Psoas muscle (tissue), 8 donors: ENCODE measurements at regions of chr1 and their contacts with region 1.

Region 1: DNA sequence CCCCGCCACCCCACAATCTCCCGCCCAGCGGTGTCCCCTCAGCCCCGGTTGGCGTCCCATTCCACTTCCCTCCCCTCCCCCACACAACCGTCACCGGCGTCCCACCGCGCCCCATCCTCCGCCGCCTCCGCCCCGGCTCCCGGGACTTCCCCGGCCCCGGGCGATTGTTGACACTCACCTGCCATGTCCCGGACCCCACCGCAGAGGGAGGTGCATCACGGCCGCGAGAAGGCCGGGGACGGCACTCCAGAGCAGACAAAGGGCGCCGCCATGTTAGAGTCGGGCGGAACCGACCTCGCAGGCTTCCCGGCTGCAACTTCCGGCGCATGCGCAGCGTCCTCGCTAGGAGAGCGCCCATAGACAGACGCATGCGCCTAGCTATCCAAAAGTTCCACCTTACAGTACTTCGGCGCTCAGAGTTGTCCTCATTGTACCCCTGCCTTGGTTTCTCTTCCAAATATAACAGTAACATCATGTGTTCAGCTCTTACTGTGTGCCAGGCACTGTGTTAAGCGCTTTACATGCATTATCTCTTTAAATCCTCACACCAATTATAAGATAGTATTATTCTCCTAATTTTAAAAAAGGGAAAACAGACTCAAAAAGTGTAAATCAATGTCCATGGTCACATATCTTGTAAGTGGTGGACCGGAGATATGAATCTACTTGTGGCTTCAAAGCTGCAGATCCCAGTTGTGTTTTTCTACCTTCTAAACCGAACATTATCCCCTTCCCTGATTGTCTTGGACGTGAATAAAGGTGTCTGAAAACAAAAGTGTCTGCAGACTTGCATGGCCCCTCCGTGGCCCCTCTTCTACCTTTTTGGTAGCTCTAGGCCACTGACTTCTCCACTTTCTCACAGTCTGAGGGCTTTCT is at the start of gene ZBTB17:
- DNase-seq: peak; percentile 95 to 98
- ATAC-seq: peak; percentile 98 to 99 (median 98)
- H3K4me3 ChIP-seq: peak within 1 kb of the TSS; percentile 97
- H3K27ac ChIP-seq: peak within 1 kb of the TSS; percentile 83
- H3K4me1 ChIP-seq: peaks cover 11% of the 10 kb centered on the region
- H3K27me3 ChIP-seq: no peaks in the 10 kb centered on the region
- CTCF ChIP-seq: no peak
- total RNA-seq, gene ZBTB17: 23.5 to 29.5 (median 26.2) TPM

Region 2: DNA sequence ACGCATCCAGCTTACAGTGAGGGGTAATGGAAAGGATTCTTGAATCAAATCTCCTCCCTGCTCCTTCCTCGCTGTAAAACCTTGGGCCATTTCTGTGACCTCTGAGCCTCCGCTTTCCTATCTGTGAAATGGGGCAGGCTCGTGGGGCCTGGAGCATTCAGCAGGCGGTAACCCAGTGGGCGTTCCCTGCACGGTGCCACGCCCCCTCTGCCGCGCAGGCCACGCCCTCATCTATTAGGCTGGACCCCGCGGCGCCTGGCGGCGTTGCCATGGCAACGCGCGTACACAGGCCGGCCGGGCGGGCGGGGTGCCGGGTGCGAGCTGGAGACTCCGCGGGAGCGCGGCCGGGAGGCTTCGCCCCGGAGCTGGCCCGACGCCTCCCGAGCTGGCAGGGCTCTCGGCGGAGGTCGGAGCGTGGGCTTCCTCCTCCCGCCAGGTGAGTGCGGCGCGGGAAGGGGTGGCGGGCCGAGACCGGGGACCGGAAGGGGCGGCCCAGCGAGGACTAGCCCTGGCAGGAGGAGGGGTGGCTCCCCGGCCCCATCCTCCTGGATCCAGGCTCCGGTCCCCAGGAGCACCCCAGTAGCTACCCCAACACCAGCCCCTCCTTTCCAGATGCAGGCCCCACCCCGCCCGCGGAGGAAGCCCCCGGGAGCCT is 729.0 kb before region 1 on chr1 and contains the start of gene FHAD1:
- intact Hi-C with region 1: no loop called
- DNase-seq: peak in 1 of 2 donors; percentile 46
- ATAC-seq: peak in 1 of 4 donors; percentile 37
- H3K4me3 ChIP-seq: peak within 1 kb of the TSS; percentile 44
- H3K27ac ChIP-seq: no peak within 1 kb of the TSS
- H3K4me1 ChIP-seq: no peaks in the 10 kb centered on the region
- H3K27me3 ChIP-seq: peaks cover 3 to 35% (median 7%) of the 10 kb centered on the region in 3 donors
- CTCF ChIP-seq: no peak
- total RNA-seq, gene FHAD1: 0.06 to 0.24 TPM in 2 of 4 donors, not detected in the others

Region 3: DNA sequence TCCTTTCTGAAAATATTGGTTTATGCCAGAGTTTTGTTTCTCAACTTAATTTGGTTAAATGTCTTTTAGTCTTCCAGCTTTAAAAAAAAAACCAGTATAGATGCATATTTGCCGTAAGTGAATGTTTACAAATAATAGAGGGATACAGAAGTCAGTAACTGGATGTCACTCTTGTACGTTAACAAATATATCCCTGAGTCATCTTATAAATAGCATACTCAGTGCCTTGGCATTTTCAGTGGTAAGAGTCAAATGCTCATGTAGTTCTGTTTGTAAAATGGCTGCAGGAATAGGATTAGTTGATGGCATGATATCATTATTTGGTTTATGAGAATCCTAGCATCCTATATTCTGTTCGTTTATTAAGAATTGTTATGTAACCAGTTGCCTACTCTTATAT is 73.2 kb before region 1 on chr1:
- intact Hi-C with region 1: no loop called
- DNase-seq: no peak
- ATAC-seq: peak; percentile 85 to 87 (median 85)
- H3K4me3 ChIP-seq: peak overlapping the region; percentile 43
- H3K27ac ChIP-seq: peak overlapping the region; percentile 91
- H3K4me1 ChIP-seq: peaks cover 76% of the 10 kb centered on the region
- H3K27me3 ChIP-seq: no peaks in the 10 kb centered on the region
- CTCF ChIP-seq: no peak

Region 4: DNA sequence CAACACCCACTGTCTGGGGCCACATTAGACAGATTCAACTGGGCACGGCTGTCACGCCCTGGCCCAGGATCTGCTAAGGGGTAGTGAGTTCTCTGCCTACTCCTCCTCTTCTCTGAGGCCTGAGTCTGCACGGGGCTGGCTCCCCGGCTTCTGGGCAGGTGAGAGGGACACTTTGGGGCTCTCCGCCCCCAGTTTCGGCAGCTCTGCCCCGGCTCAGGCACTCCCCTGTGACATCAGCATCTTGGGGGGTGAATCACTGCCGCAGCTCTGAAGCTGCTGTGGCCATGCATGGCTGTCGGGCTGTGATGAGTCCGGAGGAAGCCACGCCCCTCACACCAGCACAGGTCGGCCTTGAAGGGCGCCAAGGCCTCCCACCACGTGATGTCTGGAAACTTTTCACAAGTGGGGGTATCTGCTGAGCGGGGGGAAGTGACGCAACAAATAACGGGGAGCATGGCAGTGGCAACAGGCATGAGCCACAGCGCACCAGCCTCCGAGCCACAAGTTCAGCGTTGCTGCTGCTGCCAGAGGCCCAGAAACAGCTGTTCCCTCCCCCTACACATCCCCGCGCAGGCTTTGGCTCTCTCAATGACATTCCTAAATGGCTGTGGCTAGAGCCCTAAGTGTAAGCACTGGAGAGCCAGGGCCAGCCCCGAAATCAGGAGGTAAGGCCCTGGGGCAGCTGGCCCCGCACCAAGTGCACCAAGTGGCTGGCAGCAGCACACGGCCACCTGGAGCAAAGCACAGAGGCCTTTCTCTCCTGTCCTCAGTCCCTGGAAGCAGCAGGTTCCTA is 26.4 kb before region 1 on chr1:
- intact Hi-C with region 1: loop called in 1 of 2 experiments (anchors 2 kb)
- DNase-seq: peak; percentile 93 to 94
- ATAC-seq: peak; percentile 86 to 88 (median 87)
- H3K4me3 ChIP-seq: peak overlapping the region; percentile 52
- H3K27ac ChIP-seq: peak overlapping the region; percentile 93
- H3K4me1 ChIP-seq: peaks cover 54% of the 10 kb centered on the region
- H3K27me3 ChIP-seq: no peaks in the 10 kb centered on the region
- CTCF ChIP-seq: no peak